Heart left ventricle (tissue), 16 donors: ENCODE measurements at regions of chr2 and their contacts with region 1.

Region 1: DNA sequence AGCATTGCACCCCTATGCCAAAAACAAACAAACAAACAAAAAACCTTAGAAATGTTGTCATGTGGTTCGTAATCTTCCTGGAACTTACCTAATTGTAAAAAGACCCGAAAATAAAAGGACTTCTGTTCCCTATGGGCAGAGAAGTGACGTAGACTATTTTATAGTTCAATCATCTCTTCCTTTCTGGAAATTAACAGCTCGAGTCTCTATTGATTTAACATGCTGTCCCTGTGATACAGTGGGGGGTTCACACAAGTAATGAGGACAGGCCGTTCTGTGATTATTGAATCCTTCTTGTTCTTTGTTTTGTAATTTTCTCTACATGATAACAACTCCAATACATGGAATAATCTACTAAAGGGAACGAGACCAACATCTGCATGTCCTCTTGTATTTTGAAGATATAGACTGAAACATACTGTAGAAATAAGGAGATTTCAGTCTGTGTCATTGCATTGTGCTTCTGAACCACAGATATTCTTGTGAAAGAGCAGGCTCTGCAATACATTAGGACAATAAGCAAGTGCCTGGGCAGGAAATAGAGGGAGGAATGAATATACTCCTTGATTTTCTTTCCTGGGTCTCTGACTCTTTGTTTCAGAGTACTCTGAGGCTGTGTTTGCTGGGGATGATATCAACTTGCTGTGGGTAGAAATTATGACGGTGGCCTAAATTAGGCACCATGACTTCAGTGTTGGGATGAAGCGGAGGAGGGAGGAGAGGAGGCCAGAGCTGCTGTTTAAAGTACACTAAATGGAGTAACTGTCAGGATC is 65.7 kb upstream of the PPM1B start:
- DNase-seq: no peak
- ATAC-seq: peak in 3 of 4 donors; percentile 59 to 86 (median 75)
- H3K4me3 ChIP-seq: no peak overlapping the region
- H3K27ac ChIP-seq: peak overlapping the region in 6 of 12 donors; percentile 11 to 75 (median 42)
- H3K4me1 ChIP-seq: peaks cover 0 to 17% (median 9%) of the 10 kb centered on the region in 12 donors
- H3K27me3 ChIP-seq: no peaks in the 10 kb centered on the region
- CTCF ChIP-seq: no peak
- POLR2A ChIP-seq: no peak

Region 2: DNA sequence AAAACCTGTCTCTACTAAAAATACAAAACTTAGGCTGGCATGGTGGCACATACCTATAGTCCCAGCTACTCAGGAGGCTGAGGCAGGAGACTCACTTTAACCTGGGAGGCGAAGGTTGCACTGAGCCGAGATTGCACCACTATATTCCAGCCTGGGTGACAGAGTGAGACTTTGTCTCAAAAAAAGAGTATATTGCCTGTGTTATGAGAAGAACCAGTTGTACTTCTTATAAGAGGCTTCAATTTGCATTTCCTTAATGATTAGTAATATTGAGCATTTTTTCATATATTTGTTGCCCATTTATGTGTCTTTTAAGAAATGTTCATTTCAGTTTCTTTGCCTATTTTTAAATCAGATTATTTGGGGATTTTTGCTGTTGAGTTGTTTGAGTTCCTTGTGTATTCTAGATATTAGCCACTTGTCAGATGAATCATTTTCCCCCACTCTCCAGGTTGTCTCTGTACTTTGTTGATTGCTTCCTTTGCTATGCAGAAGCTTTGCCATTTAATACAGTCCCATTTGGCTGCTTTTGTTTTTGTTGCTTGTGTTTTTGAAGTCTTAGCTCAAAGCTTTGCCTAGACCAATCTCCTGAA is 31.4 kb before region 1 on chr2:
- intact Hi-C with region 1: loop called in 1 of 10 experiments (anchors 2 kb)
- DNase-seq: no peak
- ATAC-seq: no peak
- H3K4me3 ChIP-seq: no peak overlapping the region
- H3K27ac ChIP-seq: no peak overlapping the region
- H3K4me1 ChIP-seq: peaks cover 0 to 6% (median 0%) of the 10 kb centered on the region in 12 donors
- H3K27me3 ChIP-seq: no peaks in the 10 kb centered on the region
- CTCF ChIP-seq: no peak
- POLR2A ChIP-seq: no peak

Region 3: GRCh38 chr2:44139741-44140140 is 36.8 kb after region 1 on chr2:
- intact Hi-C with region 1: no loop called
- DNase-seq: no peak
- ATAC-seq: no peak
- H3K4me3 ChIP-seq: no peak overlapping the region
- H3K27ac ChIP-seq: no peak overlapping the region
- H3K4me1 ChIP-seq: peaks cover 0 to 4% (median 0%) of the 10 kb centered on the region in 12 donors
- H3K27me3 ChIP-seq: no peaks in the 10 kb centered on the region
- CTCF ChIP-seq: no peak
- POLR2A ChIP-seq: no peak

Region 4: GRCh38 chr2:44205169-44205568 is 102.2 kb after region 1 on chr2:
- intact Hi-C with region 1: no loop called
- DNase-seq: no peak
- ATAC-seq: no peak
- H3K4me3 ChIP-seq: no peak overlapping the region
- H3K27ac ChIP-seq: no peak overlapping the region
- H3K4me1 ChIP-seq: peaks cover 0 to 15% (median 9%) of the 10 kb centered on the region in 12 donors
- H3K27me3 ChIP-seq: no peaks in the 10 kb centered on the region
- CTCF ChIP-seq: no peak
- POLR2A ChIP-seq: no peak